ENCODE measurements at regions of chr2 and their contacts with region 1.

Region 1: GRCh38 chr2:237060534-237061312 is 25.0 kb upstream of the COPS8 start:
- DNase-seq: peak in 7 of 10 donors; percentile 38 to 72 (median 54)
- H3K4me3 ChIP-seq: peak overlapping the region in 36 of 59 donors; percentile 1 to 50 (median 28)
- H3K27ac ChIP-seq: no peak overlapping the region
- H3K27me3 ChIP-seq: no peaks in the 10 kb centered on the region
- CTCF ChIP-seq: peak; percentile 51 to 89 (median 73)

Region 2: GRCh38 chr2:236352761-236353593 is 707.7 kb before region 1 on chr2:
- intact Hi-C with region 1: loop called (anchors 2 to 5 kb)
- DNase-seq: peak in 1 of 10 donors; percentile 48
- H3K4me3 ChIP-seq: peak overlapping the region in 1 of 59 donors; percentile 21
- H3K27ac ChIP-seq: no peak overlapping the region
- H3K27me3 ChIP-seq: no peaks in the 10 kb centered on the region
- CTCF ChIP-seq: peak; percentile 71 to 93 (median 86)

Region 3: GRCh38 chr2:236512902-236513435 is 547.8 kb before region 1 on chr2:
- intact Hi-C with region 1: loop called (anchors 10 kb)
- DNase-seq: peak in 8 of 10 donors; percentile 36 to 68 (median 51)
- H3K4me3 ChIP-seq: no peak overlapping the region
- H3K27ac ChIP-seq: no peak overlapping the region
- H3K27me3 ChIP-seq: no peaks in the 10 kb centered on the region
- CTCF ChIP-seq: peak; percentile 28 to 92 (median 80)

Region 4: DNA sequence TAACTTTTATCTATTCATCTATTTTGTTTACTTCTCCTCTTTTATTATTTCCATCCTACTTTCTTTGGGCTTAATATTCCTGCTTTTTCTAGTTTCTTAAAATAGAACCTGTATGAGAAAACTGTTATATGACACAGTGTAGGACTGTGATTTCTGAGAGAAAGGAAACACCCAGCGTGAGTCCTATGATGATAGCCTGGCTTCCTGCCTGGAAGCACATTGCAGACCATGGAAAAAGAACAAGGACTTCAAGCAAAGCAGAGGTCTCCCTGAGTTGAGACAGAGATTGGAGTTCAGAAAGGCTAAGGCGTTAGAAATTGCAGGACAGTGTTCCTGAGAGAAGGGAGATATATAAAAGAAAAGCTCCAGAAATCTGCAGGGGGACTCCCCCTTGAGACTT is 745.6 kb after region 1 on chr2:
- intact Hi-C with region 1: no loop called
- DNase-seq: no peak
- H3K4me3 ChIP-seq: no peak overlapping the region
- H3K27ac ChIP-seq: no peak overlapping the region
- H3K27me3 ChIP-seq: peaks cover 0 to 6% (median 0%) of the 10 kb centered on the region in 45 donors
- CTCF ChIP-seq: no peak